Endothelial cell of umbilical vein (primary cell): ENCODE measurements at regions of chrX and their contacts with region 1.

Region 1: GRCh38 chrX:27309406-27309805 is 153.7 kb downstream of the PPP4R3C start:
- DNase-seq: peak; percentile 89
- H3K4me3 ChIP-seq: no peak overlapping the region
- H3K27ac ChIP-seq: peak overlapping the region; percentile 77
- H3K4me1 ChIP-seq: peaks cover 21% of the 10 kb centered on the region
- H3K27me3 ChIP-seq: no peaks in the 10 kb centered on the region
- CTCF ChIP-seq: no peak
- POLR2A ChIP-seq: no peak

Region 2: GRCh38 chrX:27132862-27133261 is 176.5 kb before region 1 on chrX:
- CTCF ChIA-PET with region 1: no interaction called
- POLR2A ChIA-PET with region 1: no interaction called
- dilution Hi-C with region 1: no loop called
- intact Hi-C with region 1: loop called (anchors 10 kb)
- DNase-seq: peak; percentile 85
- H3K4me3 ChIP-seq: no peak overlapping the region
- H3K27ac ChIP-seq: peak overlapping the region; percentile 34
- H3K4me1 ChIP-seq: no peaks in the 10 kb centered on the region
- H3K27me3 ChIP-seq: no peaks in the 10 kb centered on the region
- CTCF ChIP-seq: no peak
- POLR2A ChIP-seq: no peak

Region 3: DNA sequence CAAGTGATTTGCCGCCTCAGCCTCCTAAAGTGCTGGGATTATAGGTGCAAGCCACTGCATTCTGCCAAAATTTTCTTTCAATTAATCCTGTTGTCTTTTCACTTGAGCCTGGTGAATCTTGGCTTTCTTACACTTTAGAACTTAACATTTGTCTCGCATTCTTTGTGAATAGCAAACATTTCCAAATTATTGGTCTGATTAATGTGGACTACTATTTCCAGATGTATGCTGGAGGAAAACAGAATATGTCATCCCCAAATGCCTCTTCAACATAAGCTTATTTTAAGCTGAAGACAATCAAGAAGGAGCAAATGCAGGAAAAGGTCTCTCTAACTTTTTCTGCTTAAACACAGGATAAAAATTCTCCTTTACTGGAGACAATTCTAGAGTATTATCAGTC is 79.7 kb before region 1 on chrX:
- CTCF ChIA-PET with region 1: no interaction called
- POLR2A ChIA-PET with region 1: no interaction called
- dilution Hi-C with region 1: no loop called
- intact Hi-C with region 1: loop called (anchors 5 kb)
- DNase-seq: no peak
- H3K4me3 ChIP-seq: no peak overlapping the region
- H3K27ac ChIP-seq: no peak overlapping the region
- H3K4me1 ChIP-seq: no peaks in the 10 kb centered on the region
- H3K27me3 ChIP-seq: no peaks in the 10 kb centered on the region
- CTCF ChIP-seq: no peak
- POLR2A ChIP-seq: no peak

Region 4: GRCh38 chrX:27241981-27242380 is 67.4 kb before region 1 on chrX:
- CTCF ChIA-PET with region 1: no interaction called
- POLR2A ChIA-PET with region 1: no interaction called
- dilution Hi-C with region 1: no loop called
- intact Hi-C with region 1: no loop called
- DNase-seq: peak; percentile 48
- H3K4me3 ChIP-seq: no peak overlapping the region
- H3K27ac ChIP-seq: no peak overlapping the region
- H3K4me1 ChIP-seq: no peaks in the 10 kb centered on the region
- H3K27me3 ChIP-seq: no peaks in the 10 kb centered on the region
- CTCF ChIP-seq: no peak
- POLR2A ChIP-seq: no peak

Region 5: GRCh38 chrX:27746516-27746915 is 437.1 kb after region 1 on chrX:
- CTCF ChIA-PET with region 1: no interaction called
- POLR2A ChIA-PET with region 1: no interaction called
- dilution Hi-C with region 1: no loop called
- intact Hi-C with region 1: no loop called
- DNase-seq: no peak
- H3K4me3 ChIP-seq: no peak overlapping the region
- H3K27ac ChIP-seq: no peak overlapping the region
- H3K4me1 ChIP-seq: no peaks in the 10 kb centered on the region
- H3K27me3 ChIP-seq: no peaks in the 10 kb centered on the region
- CTCF ChIP-seq: no peak
- POLR2A ChIP-seq: no peak